ENCODE measurements at regions of chr13 and their contacts with region 1.

Region 1: DNA sequence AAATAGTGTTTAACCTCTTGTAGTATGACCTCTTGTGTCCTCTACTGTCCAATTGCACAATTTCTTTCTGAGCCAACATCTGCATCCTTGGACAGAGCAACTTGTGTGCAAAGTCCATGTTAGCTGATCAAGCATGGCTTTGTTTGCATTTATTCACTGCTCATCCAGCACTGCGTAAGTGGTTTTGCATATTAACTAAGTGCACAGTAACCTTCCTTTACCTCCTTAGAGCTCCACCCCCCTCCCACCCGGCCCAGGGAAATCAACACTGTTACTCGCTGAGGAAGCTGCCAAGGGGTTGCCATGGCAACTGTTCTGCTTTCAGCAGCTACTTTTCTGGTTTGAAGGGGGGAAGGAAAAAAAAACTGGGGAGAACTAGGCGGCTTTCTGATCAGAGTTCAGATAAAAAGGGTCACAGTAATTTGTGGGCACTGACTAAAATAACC is 153.5 kb upstream of the KLF12 start:
- DNase-seq: peak; percentile 87
- H3K4me3 ChIP-seq: peak overlapping the region in 3 of 4 donors; percentile 21 to 32 (median 32)
- H3K27ac ChIP-seq: peak overlapping the region in 3 of 4 donors; percentile 25 to 78 (median 60)
- H3K4me1 ChIP-seq: peaks cover 0 to 50% (median 39%) of the 10 kb centered on the region in 4 donors
- H3K27me3 ChIP-seq: no peaks in the 10 kb centered on the region
- CTCF ChIP-seq: no peak
- EP300 ChIP-seq: no peak
- POLR2A ChIP-seq: no peak

Region 2: DNA sequence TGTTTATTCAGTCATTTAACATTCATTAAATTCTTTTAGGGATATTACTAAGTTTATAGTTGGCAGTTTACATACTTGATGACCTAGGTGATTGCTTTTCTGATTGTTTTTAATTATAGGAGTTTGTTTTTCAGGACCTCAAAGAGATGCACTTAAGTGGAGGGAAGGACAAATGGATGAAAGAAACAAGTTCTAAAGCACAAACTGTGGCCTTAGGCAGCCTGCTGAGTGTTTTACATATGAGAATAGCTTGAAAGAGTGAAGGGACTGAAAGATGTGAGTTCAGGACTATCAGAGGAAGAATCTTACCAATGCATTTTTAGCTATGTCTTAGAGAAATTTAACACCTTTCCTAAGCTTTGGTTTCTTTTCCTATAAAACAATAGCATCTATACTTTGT is 556.2 kb before region 1 on chr13:
- intact Hi-C with region 1: no loop called
- DNase-seq: no peak
- H3K4me3 ChIP-seq: no peak overlapping the region
- H3K27ac ChIP-seq: no peak overlapping the region
- H3K4me1 ChIP-seq: no peaks in the 10 kb centered on the region
- H3K27me3 ChIP-seq: no peaks in the 10 kb centered on the region
- CTCF ChIP-seq: no peak
- EP300 ChIP-seq: no peak
- POLR2A ChIP-seq: no peak

Region 3: GRCh38 chr13:73754727-73755292 is 532.9 kb before region 1 on chr13:
- intact Hi-C with region 1: loop called (anchors 5 kb)
- DNase-seq: no peak
- H3K4me3 ChIP-seq: no peak overlapping the region
- H3K27ac ChIP-seq: no peak overlapping the region
- H3K4me1 ChIP-seq: peaks cover 0 to 42% (median 20%) of the 10 kb centered on the region in 4 donors
- H3K27me3 ChIP-seq: no peaks in the 10 kb centered on the region
- CTCF ChIP-seq: peak; percentile 27 to 73 (median 62)
- EP300 ChIP-seq: no peak
- POLR2A ChIP-seq: no peak

Region 4: DNA sequence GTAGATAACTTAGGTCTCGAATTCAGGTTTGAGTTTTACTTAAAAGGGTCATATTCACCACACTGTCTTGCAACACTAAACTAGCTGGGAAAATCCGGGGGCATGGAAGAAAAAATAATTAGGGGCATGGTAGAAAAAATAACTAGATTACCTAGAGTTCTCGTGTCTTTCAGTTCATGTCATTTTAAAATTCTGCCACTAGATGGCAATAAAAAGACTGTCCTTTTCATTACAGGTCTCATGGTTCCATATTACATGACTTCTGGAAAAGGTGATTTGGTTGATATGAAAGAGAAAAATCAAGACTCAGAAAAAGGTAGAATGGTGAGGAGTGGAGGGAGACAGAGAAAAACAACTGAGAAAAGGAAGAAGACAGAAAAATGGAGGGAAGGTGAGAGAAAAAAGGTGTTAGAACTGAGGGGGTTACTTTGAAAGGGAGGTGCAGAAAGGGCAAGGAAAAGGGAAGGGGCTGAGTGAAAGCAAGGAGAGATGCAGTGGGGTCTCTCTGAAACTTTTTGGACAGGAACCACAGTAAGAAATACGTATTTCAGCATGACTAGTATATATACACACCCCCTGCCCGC is 452.5 kb before region 1 on chr13:
- intact Hi-C with region 1: loop called (anchors 2 kb)
- DNase-seq: no peak
- H3K4me3 ChIP-seq: no peak overlapping the region
- H3K27ac ChIP-seq: no peak overlapping the region
- H3K4me1 ChIP-seq: peaks cover 0 to 26% (median 20%) of the 10 kb centered on the region in 4 donors
- H3K27me3 ChIP-seq: no peaks in the 10 kb centered on the region
- CTCF ChIP-seq: peak; percentile 48 to 74 (median 68)
- EP300 ChIP-seq: no peak
- POLR2A ChIP-seq: no peak

Region 5: GRCh38 chr13:73943137-73943964 is 344.4 kb before region 1 on chr13:
- intact Hi-C with region 1: loop called (anchors 5 kb)
- DNase-seq: no peak
- H3K4me3 ChIP-seq: no peak overlapping the region
- H3K27ac ChIP-seq: peak overlapping the region; percentile 24 to 73 (median 52)
- H3K4me1 ChIP-seq: peaks cover 0 to 42% (median 32%) of the 10 kb centered on the region in 4 donors
- H3K27me3 ChIP-seq: no peaks in the 10 kb centered on the region
- CTCF ChIP-seq: no peak
- EP300 ChIP-seq: no peak
- POLR2A ChIP-seq: no peak

Region 6: GRCh38 chr13:75219479-75220237 is 931.9 kb after region 1 on chr13:
- intact Hi-C with region 1: loop called (anchors 10 kb)
- DNase-seq: peak; percentile 87
- H3K4me3 ChIP-seq: peak overlapping the region in 2 of 4 donors; percentile 18 to 23
- H3K27ac ChIP-seq: no peak overlapping the region
- H3K4me1 ChIP-seq: peaks cover 0 to 9% (median 2%) of the 10 kb centered on the region in 4 donors
- H3K27me3 ChIP-seq: peaks cover 0 to 4% (median 0%) of the 10 kb centered on the region in 3 donors
- CTCF ChIP-seq: peak; percentile 67 to 97 (median 78)
- EP300 ChIP-seq: no peak
- POLR2A ChIP-seq: no peak

Measured in sigmoid colon (tissue), 7 donors.